ENCODE measurements at regions of chr1 and their contacts with region 1.

Region 1: DNA sequence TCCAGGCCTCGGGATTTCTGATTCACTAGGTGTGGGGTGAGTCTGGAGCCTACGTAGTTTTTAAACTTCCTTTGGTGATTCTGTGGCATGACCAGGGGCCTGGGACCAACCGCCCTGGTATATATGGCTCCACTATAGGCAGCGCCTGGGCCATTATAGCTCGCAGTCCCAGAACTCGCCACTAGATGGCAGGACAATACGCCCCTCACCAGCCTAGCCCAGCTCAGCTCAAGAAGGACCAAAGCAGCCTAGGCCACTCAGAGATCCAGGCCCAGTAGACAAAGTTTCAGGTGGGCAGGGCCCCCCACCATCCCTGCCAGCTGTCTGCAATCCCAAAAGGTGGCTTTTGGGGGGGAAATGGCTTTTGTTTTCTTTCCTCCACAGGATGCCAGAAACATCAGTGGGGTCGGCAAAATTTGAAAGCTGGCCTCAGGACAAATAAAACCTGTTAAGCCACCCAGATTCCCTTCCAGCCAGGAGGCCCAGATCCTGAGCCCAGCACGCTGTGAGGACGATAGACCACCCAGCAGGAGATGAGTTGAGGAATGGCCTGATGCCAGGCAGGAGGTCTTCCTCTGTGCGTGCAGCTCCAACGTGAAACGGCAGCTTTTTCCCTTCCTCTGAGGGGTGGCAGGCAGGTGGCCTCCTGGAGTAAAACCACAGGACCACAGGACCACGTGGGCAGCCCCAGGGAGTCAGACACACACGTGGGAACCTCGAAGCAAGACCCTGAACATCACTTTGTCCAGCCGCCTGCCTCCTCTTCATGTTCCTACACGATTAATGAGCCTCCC is 24.8 kb upstream of the TMEM51 start:
- DNase-seq: peak; percentile 60
- H3K4me3 ChIP-seq: no peak overlapping the region
- H3K27ac ChIP-seq: no peak overlapping the region
- H3K4me1 ChIP-seq: no peaks in the 10 kb centered on the region
- CTCF ChIP-seq: peak; percentile 91

Region 2: DNA sequence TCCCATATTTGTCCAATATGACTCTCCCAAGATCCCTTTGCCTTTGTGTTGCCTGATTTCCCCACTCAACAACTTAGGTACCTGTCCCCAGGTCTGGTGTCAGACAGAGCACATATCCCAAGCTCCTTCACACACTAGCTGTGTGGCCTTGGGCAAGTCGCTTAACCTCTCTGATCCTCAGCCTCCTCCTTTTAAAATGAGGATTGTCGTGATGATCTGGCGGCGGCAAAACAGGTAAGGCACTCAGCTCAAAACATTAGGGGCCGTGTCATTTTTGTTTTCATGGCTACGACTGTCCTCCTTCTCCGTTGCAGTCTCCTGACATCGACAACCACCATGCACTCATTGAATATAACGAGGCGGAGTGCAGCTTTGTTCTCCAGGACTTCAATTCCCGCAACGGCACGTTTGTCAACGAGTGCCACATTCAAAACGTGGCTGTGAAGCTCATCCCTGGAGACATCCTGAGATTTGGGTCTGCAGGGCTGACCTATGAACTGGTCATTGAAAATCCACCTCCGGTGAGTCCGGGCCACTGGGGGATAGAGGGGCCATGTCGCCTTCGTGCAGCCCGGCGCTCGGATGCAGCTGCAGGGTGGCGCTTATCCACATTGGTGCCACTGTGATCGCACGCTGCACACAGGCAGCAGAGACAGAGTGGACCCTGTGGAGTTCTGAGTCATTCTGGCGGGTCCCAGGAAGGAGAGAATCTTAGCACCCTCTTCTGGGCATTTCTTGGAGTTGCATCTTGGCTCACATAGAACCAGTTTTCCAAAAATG is 143.5 kb after region 1 on chr1:
- CTCF ChIA-PET with region 1: no interaction called
- POLR2A ChIA-PET with region 1: interaction called, 4 read pairs
- intact Hi-C with region 1: loop called (anchors 1 kb)
- DNase-seq: peak; percentile 26
- H3K4me3 ChIP-seq: no peak overlapping the region
- H3K27ac ChIP-seq: no peak overlapping the region
- H3K4me1 ChIP-seq: no peaks in the 10 kb centered on the region
- CTCF ChIP-seq: peak; percentile 79

Region 3: DNA sequence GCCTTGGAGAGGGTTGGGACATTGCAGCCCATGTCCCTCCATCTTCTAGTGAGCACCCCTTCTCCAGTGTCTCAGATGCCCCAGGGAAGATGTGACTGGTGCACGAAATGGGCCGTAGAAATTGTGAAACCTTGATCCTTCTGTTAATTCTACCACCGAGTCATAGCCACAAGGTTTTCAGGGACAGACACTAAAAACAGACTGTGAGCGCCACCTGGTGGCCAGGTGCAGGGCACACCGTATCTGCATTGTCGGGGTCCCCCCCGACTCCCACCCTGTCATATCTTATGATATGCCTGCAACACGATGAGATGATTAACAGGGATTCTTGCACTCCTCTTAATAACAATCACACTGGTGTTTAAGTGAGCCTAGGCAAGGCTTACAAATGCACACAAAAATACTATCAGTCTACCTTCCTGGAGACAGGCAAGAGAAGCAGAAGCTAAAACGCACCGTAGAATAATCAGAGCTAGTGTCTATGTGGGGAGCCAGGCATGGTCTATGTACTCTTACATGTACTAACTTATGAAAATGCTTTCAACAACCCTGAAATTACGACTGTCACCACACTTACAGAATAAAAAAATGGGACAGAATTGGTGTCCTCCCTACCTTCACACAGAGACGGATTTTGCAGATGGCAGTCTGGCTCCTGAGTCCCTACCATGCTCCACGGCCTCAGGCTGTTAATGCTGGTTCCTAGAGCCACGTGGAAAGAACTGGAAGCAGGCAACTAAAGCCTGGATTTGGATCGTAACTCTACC is 176.2 kb after region 1 on chr1:
- CTCF ChIA-PET with region 1: no interaction called
- POLR2A ChIA-PET with region 1: no interaction called
- intact Hi-C with region 1: loop called (anchors 1 kb)
- DNase-seq: peak; percentile 70
- H3K4me3 ChIP-seq: no peak overlapping the region
- H3K27ac ChIP-seq: no peak overlapping the region
- H3K4me1 ChIP-seq: no peaks in the 10 kb centered on the region
- CTCF ChIP-seq: peak; percentile 98

Measured in OCI-LY7 (cell line).